Cardiac septum (tissue), 1 donor: ENCODE measurements at regions of chr3 and their contacts with region 1.

Region 1: GRCh38 chr3:71955240-71956068 is 170.5 kb upstream of the PROK2 start:
- DNase-seq: peak; percentile 81

Region 2: GRCh38 chr3:71725279-71725991 is 230.0 kb before region 1 on chr3 and contains the start of gene EIF4E3:
- intact Hi-C with region 1: loop called (anchors 10 kb)
- DNase-seq: no peak
- total RNA-seq, gene EIF4E3: 54.7 TPM

Region 3: GRCh38 chr3:71881044-71881443 is 74.4 kb before region 1 on chr3:
- intact Hi-C with region 1: loop called (anchors 5 kb)
- DNase-seq: no peak

Region 4: GRCh38 chr3:71987086-71987735 is 31.8 kb after region 1 on chr3:
- intact Hi-C with region 1: no loop called
- DNase-seq: no peak